HEK293 (cell line): ENCODE measurements at regions of chr4 and their contacts with region 1.

Region 1: DNA sequence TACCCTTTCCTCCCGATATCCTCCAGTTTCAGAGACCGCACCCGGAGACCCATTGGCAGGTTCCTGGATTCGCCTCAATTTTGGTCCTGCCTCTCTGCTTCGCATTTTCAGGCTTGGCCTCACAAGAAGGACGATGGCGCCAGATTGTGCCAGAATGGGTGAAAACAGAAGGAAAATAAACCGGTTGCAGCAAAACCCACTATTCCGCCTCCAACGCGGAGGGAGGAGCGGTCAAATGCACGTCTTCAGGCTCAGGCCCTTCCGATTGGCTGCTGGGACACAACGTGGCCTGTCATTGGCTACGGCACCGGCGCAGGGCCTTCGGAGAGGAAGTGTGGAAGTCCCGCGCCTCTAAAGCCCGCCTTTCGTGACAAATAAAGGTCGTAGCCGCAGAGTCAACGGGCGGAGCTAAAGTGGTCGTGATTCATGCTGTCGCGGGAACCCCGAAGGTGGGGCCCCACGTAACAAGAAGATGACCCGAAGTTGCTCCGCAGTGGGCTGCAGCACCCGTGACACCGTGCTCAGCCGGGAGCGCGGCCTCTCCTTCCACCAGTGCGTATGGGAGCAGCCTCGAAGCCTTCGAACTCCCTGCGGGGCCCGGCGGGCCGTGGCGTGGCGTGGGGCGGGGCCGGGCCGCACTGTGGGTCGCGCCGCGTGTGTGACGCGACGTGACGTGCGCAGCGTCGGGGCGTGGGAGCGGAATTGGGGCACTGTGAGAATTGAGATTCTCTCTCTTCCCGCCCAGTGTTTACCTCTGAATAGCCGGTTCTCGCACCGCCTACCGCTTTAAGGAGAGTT is at the start of gene THAP9:
- H3K4me3 ChIP-seq: peak within 1 kb of the TSS; percentile 72
- H3K27ac ChIP-seq: peak within 1 kb of the TSS; percentile 96
- H3K4me1 ChIP-seq: no peaks in the 10 kb centered on the region
- CTCF ChIP-seq: no peak

Region 2: GRCh38 chr4:82761229-82761628 is 139.3 kb before region 1 on chr4:
- CTCF ChIA-PET with region 1: no interaction called
- POLR2A ChIA-PET with region 1: no interaction called
- H3K4me3 ChIP-seq: no peak overlapping the region
- H3K27ac ChIP-seq: no peak overlapping the region
- H3K4me1 ChIP-seq: no peaks in the 10 kb centered on the region
- CTCF ChIP-seq: no peak

Region 3: GRCh38 chr4:82785611-82786400 is 114.7 kb before region 1 on chr4:
- CTCF ChIA-PET with region 1: no interaction called
- POLR2A ChIA-PET with region 1: no interaction called
- H3K4me3 ChIP-seq: no peak overlapping the region; the same call in 1 of the 2 replicates
- H3K27ac ChIP-seq: no peak overlapping the region
- H3K4me1 ChIP-seq: peaks cover 18% of the 10 kb centered on the region
- CTCF ChIP-seq: no peak

Region 4: GRCh38 chr4:82868572-82868971 is 32.0 kb before region 1 on chr4:
- CTCF ChIA-PET with region 1: no interaction called
- POLR2A ChIA-PET with region 1: no interaction called
- H3K4me3 ChIP-seq: no peak overlapping the region
- H3K27ac ChIP-seq: no peak overlapping the region
- H3K4me1 ChIP-seq: no peaks in the 10 kb centered on the region
- CTCF ChIP-seq: no peak

Region 5: GRCh38 chr4:82890528-82890900 is 10.0 kb before region 1 on chr4:
- CTCF ChIA-PET with region 1: interaction called, 13 read pairs
- POLR2A ChIA-PET with region 1: interaction called, 4 read pairs
- H3K4me3 ChIP-seq: peak overlapping the region; percentile 81
- H3K27ac ChIP-seq: peak overlapping the region; percentile 91
- H3K4me1 ChIP-seq: peaks cover 11% of the 10 kb centered on the region
- CTCF ChIP-seq: no peak

Region 6: GRCh38 chr4:82913305-82913704 is 12.8 kb after region 1 on chr4:
- CTCF ChIA-PET with region 1: no interaction called
- POLR2A ChIA-PET with region 1: no interaction called
- H3K4me3 ChIP-seq: no peak overlapping the region
- H3K27ac ChIP-seq: no peak overlapping the region
- H3K4me1 ChIP-seq: no peaks in the 10 kb centered on the region
- CTCF ChIP-seq: no peak

Region 7: DNA sequence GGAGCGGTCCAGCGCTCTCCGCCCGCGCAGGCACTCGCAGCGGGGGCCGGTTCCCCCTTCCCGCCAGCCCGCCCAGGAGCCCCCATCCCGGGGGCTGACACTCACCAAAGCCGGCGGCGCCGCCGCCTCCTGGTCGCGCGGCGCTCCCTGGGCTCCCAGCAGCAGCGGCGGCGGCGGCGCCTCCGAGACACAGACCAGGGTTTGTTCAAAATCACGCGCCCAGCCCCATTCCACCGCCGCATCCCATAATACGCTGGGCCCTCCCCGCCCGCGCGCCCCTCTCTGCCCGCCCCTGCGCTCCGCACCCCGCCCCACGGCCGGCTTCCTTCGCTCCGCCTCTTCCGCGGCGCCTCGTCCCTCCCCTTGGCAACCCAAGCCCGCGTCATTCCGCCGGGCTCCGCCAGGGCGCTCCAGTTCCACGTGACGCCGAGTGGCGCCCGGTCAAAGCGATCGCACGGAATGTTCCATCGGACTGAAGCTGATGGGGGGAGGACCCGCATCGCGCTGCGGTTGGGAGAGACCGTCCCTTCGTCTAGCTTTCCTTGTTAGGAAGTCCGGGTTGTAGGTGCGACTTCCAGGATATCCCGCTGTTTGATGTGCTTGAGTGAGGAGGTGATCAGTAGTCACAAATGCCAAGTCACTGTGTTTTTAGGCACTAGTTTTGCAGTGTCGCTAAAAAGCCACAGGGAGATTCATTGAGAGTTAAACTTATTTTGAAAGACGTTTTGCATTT is 112.3 kb after region 1 on chr4:
- CTCF ChIA-PET with region 1: interaction called, 5 read pairs
- POLR2A ChIA-PET with region 1: interaction called, 26 read pairs
- H3K4me3 ChIP-seq: peak overlapping the region; percentile 70
- H3K27ac ChIP-seq: peak overlapping the region; percentile 79
- H3K4me1 ChIP-seq: no peaks in the 10 kb centered on the region; the same call in 1 of the 2 replicates
- CTCF ChIP-seq: peak; percentile 76